CD8-positive, alpha-beta T cell (primary cell): ENCODE measurements at regions of chr7 and their contacts with region 1.

Region 1: GRCh38 chr7:2886900-2887299 is 42.8 kb upstream of the GNA12 start:
- DNase-seq: peak in 7 of 9 experiments; percentile 14 to 83 (median 64)
- ATAC-seq: peak; percentile 77
- H3K4me3 ChIP-seq: no peak overlapping the region
- H3K4me3 Mint-ChIP-seq: no peak overlapping the region
- H3K27ac ChIP-seq: no peak overlapping the region
- H3K27ac Mint-ChIP-seq: no peak overlapping the region
- H3K4me1 ChIP-seq: no peaks in the 10 kb centered on the region
- H3K4me1 Mint-ChIP-seq: peaks cover 4% of the 10 kb centered on the region
- H3K27me3 ChIP-seq: no peaks in the 10 kb centered on the region
- H3K27me3 Mint-ChIP-seq: no peaks in the 10 kb centered on the region
- CTCF ChIP-seq: peak; percentile 69

Region 2: DNA sequence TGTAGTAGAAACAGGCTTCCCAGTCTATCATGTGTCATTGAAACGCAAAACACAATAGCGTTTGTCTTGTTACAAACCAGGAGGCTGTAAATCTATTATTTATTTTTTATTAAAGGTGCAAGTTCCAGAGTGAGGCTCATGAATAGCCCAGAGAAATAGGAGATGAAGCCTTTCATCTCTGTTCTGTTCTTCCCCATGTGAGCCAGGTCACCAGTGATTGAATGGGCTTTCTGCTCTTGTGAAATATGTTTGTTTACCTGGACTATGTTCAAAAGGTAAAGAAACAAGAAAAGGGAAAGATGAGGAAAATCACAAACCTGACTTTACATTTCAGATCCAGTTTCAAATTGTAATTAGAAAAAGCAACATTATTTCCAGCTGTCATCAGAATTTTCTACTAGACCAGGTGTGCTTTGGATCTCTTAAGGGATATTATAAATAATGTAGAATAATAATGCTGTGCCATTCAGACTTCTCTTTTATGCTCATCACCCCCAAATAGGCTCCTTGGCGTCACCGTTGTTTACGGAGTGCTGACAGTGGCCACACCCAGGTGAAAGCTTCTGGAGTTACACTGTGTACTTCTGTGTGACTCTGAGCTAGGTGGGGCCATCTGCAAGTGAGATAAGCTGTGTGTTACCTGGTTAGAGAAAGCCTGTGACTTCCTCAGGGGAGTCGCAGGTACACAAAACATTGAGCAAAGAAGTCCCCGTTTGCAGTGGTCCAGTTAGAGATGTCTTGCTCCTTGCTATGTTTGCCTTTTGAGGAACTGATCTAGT is 689.0 kb after region 1 on chr7:
- CTCF ChIA-PET with region 1: no interaction called
- POLR2A ChIA-PET with region 1: no interaction called
- intact Hi-C with region 1: no loop called
- DNase-seq: no peak
- ATAC-seq: no peak
- H3K4me3 ChIP-seq: no peak overlapping the region
- H3K4me3 Mint-ChIP-seq: no peak overlapping the region
- H3K27ac ChIP-seq: no peak overlapping the region
- H3K27ac Mint-ChIP-seq: no peak overlapping the region
- H3K4me1 ChIP-seq: no peaks in the 10 kb centered on the region
- H3K4me1 Mint-ChIP-seq: no peaks in the 10 kb centered on the region
- H3K27me3 ChIP-seq: no peaks in the 10 kb centered on the region
- H3K27me3 Mint-ChIP-seq: peaks cover 11% of the 10 kb centered on the region
- CTCF ChIP-seq: no peak

Region 3: GRCh38 chr7:3636131-3636860 is 749.4 kb after region 1 on chr7:
- CTCF ChIA-PET with region 1: no interaction called
- POLR2A ChIA-PET with region 1: no interaction called
- intact Hi-C with region 1: no loop called
- DNase-seq: no peak
- ATAC-seq: no peak
- H3K4me3 ChIP-seq: no peak overlapping the region
- H3K4me3 Mint-ChIP-seq: no peak overlapping the region
- H3K27ac ChIP-seq: no peak overlapping the region
- H3K27ac Mint-ChIP-seq: no peak overlapping the region
- H3K4me1 ChIP-seq: no peaks in the 10 kb centered on the region
- H3K4me1 Mint-ChIP-seq: no peaks in the 10 kb centered on the region
- H3K27me3 ChIP-seq: no peaks in the 10 kb centered on the region
- H3K27me3 Mint-ChIP-seq: peaks cover 9% of the 10 kb centered on the region
- CTCF ChIP-seq: no peak

Region 4: GRCh38 chr7:3897438-3898385 is 1010.8 kb after region 1 on chr7:
- CTCF ChIA-PET with region 1: no interaction called
- POLR2A ChIA-PET with region 1: no interaction called
- intact Hi-C with region 1: loop called in 1 of 2 experiments (anchors 2 kb)
- DNase-seq: peak in 7 of 9 experiments; percentile 17 to 71 (median 51)
- ATAC-seq: peak; percentile 54
- H3K4me3 ChIP-seq: no peak overlapping the region
- H3K4me3 Mint-ChIP-seq: no peak overlapping the region
- H3K27ac ChIP-seq: no peak overlapping the region
- H3K27ac Mint-ChIP-seq: no peak overlapping the region
- H3K4me1 ChIP-seq: no peaks in the 10 kb centered on the region
- H3K4me1 Mint-ChIP-seq: no peaks in the 10 kb centered on the region
- H3K27me3 ChIP-seq: peaks cover 0 to 4% of the 10 kb centered on the region in 2 experiments
- H3K27me3 Mint-ChIP-seq: peaks cover 2% of the 10 kb centered on the region
- CTCF ChIP-seq: peak; percentile 92